CD8-positive, alpha-beta memory T cell (primary cell): ENCODE measurements at regions of chr20 and their contacts with region 1.

Region 1: DNA sequence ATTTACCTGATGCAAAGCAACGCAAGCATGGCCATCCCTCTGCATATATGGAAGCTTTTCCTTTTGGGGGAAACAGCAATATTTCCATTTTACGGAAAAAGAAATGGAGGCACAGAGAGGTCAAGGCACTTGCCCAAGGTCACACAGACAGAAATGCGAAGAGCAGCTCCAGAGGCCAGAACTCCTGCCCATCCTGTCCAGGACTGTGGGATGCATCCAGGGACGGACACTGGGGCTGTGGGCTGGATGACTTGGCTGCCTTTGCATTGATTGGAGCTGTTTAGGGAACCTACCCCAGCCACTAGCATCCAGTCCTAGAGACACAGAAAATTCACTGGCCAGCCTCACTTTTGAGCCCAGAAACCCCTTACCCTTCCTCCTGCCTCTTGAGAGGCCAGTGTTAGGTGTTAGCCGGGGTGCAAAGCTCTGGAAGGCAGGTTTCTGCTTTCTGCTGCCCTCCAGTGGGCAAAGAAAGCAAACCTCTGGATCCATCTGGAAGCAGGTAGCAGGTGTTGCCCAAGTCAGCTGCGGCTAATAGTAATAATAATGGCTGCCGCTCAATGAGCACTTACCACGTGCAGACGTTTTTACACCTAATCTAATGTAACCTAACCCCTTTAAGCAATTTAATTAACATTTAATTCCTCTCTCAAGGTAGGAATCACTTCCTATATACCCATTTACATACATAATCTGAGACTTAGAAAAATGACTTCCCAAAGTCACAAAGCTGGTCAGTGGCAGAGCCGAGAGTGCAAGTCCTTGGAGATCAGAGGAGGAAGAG is 31.7 kb upstream of the CCN5 start:
- DNase-seq: peak; percentile 18 to 76 (median 34)
- H3K4me3 ChIP-seq: no peak overlapping the region
- H3K4me3 Mint-ChIP-seq: no peak overlapping the region
- H3K27ac ChIP-seq: no peak overlapping the region
- H3K27ac Mint-ChIP-seq: peak overlapping the region in 1 of 8 donors; percentile 84
- H3K4me1 ChIP-seq: no peaks in the 10 kb centered on the region
- H3K4me1 Mint-ChIP-seq: peaks cover 9 to 19% (median 12%) of the 10 kb centered on the region in 3 donors
- H3K27me3 ChIP-seq: no peaks in the 10 kb centered on the region
- H3K27me3 Mint-ChIP-seq: peaks cover 4 to 19% of the 10 kb centered on the region in 2 donors

Region 2: DNA sequence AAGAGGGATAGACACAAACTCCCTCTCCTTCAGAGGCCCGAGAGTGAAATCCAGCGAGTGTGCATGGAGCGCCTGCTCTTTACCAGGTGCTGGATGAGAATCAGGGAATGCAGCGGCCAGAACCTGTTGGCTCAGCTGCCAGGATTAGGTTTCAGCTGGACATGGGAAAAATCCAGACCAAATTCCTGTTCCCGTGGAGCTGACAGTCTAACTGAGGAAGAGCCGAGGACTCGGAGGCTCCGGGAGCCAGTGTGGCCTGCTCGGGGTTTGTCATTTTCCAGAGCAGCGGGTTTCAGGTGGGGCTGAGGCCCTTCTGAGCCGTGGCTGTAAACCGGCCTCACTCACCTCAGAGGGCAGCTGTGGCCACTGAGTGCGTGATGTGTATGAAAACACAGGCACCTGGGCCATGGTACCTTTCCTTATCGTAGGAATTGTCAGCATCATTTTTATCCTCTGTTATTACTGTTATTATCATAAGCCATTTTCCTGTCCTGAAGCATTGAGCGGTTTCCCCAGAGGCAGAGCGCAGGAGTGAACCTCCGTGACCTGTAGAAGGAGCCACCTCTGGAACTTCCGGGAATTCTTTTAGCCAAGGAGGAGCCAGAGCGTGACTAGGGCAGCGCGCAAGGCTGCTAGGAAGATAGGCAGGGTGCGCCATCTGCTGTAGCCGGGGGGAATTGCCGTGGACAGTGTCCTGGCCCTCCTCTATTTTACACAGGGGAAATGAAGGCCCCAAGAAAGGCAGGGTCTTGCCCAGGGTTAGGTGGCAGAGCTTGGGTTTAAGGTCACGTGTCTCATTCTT is 73.7 kb before region 1 on chr20:
- CTCF ChIA-PET with region 1: interaction called, 32 read pairs
- POLR2A ChIA-PET with region 1: no interaction called
- DNase-seq: peak; percentile 74 to 87 (median 78)
- H3K4me3 ChIP-seq: no peak overlapping the region
- H3K4me3 Mint-ChIP-seq: peak overlapping the region; percentile 64 to 88 (median 72)
- H3K27ac ChIP-seq: peak overlapping the region; percentile 28
- H3K27ac Mint-ChIP-seq: peak overlapping the region; percentile 93 to 100 (median 98)
- H3K4me1 ChIP-seq: peaks cover 30% of the 10 kb centered on the region
- H3K4me1 Mint-ChIP-seq: peaks cover 32 to 37% (median 34%) of the 10 kb centered on the region in 3 donors
- H3K27me3 ChIP-seq: no peaks in the 10 kb centered on the region
- H3K27me3 Mint-ChIP-seq: peaks cover 0 to 4% of the 10 kb centered on the region in 2 donors

Region 3: DNA sequence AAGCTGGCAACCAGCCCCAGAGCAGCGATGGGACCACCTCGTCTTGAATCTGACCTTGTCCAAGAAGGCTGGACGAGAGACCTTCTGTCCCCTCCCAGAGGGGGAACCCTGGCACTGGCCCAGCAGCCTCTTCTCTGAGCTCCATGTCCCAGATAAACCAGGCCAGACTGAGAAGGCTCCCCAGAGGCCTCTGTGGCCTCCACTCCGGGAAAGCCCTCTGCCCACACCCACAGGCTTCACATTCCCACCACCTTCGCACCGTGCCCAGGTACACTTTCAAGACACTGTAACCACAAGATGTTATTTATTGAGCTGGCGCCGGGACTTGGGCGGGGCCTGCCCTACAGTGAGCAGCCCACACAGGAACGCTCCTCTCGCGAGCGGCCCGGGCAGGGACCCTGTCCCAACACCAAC is 65.1 kb before region 1 on chr20:
- CTCF ChIA-PET with region 1: interaction called, 15 read pairs
- POLR2A ChIA-PET with region 1: no interaction called
- DNase-seq: peak in 4 of 5 donors; percentile 15 to 61 (median 40)
- H3K4me3 ChIP-seq: no peak overlapping the region
- H3K4me3 Mint-ChIP-seq: peak overlapping the region in 6 of 7 donors; percentile 7 to 66 (median 22)
- H3K27ac ChIP-seq: no peak overlapping the region
- H3K27ac Mint-ChIP-seq: peak overlapping the region; percentile 72 to 94 (median 86)
- H3K4me1 ChIP-seq: peaks cover 41% of the 10 kb centered on the region
- H3K4me1 Mint-ChIP-seq: peaks cover 45 to 52% (median 49%) of the 10 kb centered on the region in 3 donors
- H3K27me3 ChIP-seq: no peaks in the 10 kb centered on the region
- H3K27me3 Mint-ChIP-seq: peaks cover 0 to 2% of the 10 kb centered on the region in 2 donors

Region 4: DNA sequence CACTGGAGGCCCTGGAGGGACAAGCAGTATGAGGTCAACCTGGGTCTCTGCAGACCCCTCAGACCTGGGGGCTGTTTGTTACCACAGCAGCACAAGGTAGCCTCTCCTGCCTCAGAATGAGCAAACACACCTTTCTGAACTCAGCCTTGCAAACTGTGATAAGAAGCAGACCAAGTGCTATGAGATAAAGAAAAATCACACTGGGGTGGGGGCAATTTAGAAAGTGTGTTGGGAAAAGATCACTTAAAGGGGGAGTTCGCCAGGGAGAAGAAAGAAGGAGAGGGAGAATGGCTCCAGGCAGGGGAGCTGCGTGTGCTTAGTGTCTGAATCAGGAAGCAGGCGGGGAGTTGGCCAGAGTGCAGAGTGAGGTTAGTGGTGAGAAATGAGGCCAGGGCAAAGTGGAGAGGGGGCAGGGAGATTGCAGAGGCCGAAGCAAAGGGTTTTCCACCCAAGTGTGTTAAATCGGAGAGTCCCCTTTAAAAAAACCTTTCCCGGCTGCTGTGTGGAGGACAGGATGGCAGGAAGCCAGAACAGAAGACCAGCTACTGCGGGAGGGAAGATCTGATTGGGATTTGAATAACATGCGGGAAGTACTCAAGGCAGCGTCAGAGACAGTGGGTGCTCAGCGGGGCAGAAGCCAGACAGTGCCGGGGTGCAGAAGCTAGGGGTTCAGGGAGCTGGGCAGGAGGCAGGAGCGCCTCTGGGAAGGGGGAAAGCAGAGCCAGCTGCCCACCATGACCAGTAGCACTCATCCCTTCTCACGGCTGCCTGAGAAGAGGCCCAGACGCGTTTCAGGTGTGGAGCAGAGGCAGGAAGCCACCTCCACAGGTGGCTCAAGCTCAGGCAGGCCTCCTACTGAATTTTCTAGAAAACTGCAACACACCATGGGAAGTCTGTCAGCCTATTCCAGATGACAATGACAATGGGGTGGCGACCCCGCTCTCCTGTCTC is 41.0 kb before region 1 on chr20:
- CTCF ChIA-PET with region 1: interaction called, 130 read pairs
- POLR2A ChIA-PET with region 1: interaction called, 5 read pairs
- DNase-seq: peak in 4 of 5 donors; percentile 17 to 53 (median 28)
- H3K4me3 ChIP-seq: peak overlapping the region; percentile 22
- H3K4me3 Mint-ChIP-seq: peak overlapping the region; percentile 32 to 86 (median 72)
- H3K27ac ChIP-seq: peak overlapping the region; percentile 69
- H3K27ac Mint-ChIP-seq: peak overlapping the region; percentile 92 to 100 (median 98)
- H3K4me1 ChIP-seq: peaks cover 69% of the 10 kb centered on the region
- H3K4me1 Mint-ChIP-seq: peaks cover 70 to 78% (median 75%) of the 10 kb centered on the region in 3 donors
- H3K27me3 ChIP-seq: no peaks in the 10 kb centered on the region
- H3K27me3 Mint-ChIP-seq: peaks cover 0 to 1% of the 10 kb centered on the region in 2 donors

Region 5: GRCh38 chr20:44695295-44696230 is 12.1 kb after region 1 on chr20:
- CTCF ChIA-PET with region 1: interaction called, 10 read pairs
- POLR2A ChIA-PET with region 1: no interaction called
- DNase-seq: no peak
- H3K4me3 ChIP-seq: no peak overlapping the region
- H3K4me3 Mint-ChIP-seq: no peak overlapping the region
- H3K27ac ChIP-seq: no peak overlapping the region
- H3K27ac Mint-ChIP-seq: peak overlapping the region in 1 of 8 donors; percentile 6
- H3K4me1 ChIP-seq: no peaks in the 10 kb centered on the region
- H3K4me1 Mint-ChIP-seq: no peaks in the 10 kb centered on the region
- H3K27me3 ChIP-seq: no peaks in the 10 kb centered on the region
- H3K27me3 Mint-ChIP-seq: peaks cover 5 to 8% of the 10 kb centered on the region in 2 donors

Region 6: DNA sequence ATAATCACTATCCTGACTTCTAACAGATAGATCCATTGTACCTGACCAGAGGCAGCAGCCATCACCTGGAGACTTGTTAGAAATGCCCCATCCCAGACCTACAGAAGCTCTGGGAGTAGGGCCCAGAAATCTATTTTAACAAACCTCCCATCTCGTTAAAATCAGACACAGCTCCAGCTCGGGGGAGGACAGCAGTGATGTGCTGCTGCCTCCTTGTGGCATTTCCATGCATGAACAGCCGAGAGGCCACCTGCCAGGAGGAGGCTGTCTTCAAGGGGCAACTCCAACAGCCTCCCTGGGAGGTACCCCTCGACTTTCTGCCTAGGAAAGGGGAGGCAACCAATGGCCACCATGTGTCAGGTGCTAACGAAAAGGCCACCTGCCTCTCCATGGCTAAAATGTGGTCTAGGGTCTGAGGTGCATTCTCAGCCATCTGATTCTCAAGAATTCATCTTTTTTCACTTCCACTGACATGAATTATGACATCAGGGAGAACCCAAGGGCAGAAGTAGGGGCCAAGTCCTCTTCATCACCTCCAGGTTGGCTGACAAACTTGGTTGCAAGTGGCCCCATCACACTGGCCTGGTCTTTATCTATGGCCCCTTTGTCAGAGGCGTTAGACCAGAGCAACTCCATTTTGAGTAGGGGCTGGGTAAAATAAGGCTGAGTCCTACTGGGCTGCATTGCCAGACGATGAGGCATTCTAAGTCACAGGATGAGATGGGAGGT is 50.0 kb after region 1 on chr20:
- CTCF ChIA-PET with region 1: interaction called, 11 read pairs
- POLR2A ChIA-PET with region 1: no interaction called
- DNase-seq: peak; percentile 20 to 66 (median 33)
- H3K4me3 ChIP-seq: no peak overlapping the region
- H3K4me3 Mint-ChIP-seq: no peak overlapping the region
- H3K27ac ChIP-seq: no peak overlapping the region
- H3K27ac Mint-ChIP-seq: no peak overlapping the region
- H3K4me1 ChIP-seq: peaks cover 8% of the 10 kb centered on the region
- H3K4me1 Mint-ChIP-seq: peaks cover 7 to 11% (median 11%) of the 10 kb centered on the region in 3 donors
- H3K27me3 ChIP-seq: no peaks in the 10 kb centered on the region
- H3K27me3 Mint-ChIP-seq: peaks cover 0 to 3% of the 10 kb centered on the region in 2 donors

Region 7: GRCh38 chr20:44866703-44867335 is 183.4 kb after region 1 on chr20:
- CTCF ChIA-PET with region 1: interaction called, 17 read pairs
- POLR2A ChIA-PET with region 1: no interaction called
- DNase-seq: no peak
- H3K4me3 ChIP-seq: no peak overlapping the region
- H3K4me3 Mint-ChIP-seq: peak overlapping the region in 6 of 7 donors; percentile 55 to 86 (median 74)
- H3K27ac ChIP-seq: no peak overlapping the region
- H3K27ac Mint-ChIP-seq: no peak overlapping the region
- H3K4me1 ChIP-seq: no peaks in the 10 kb centered on the region
- H3K4me1 Mint-ChIP-seq: peaks cover 6 to 13% (median 9%) of the 10 kb centered on the region in 3 donors
- H3K27me3 ChIP-seq: peaks cover 8% of the 10 kb centered on the region
- H3K27me3 Mint-ChIP-seq: peaks cover 0 to 22% of the 10 kb centered on the region in 2 donors